Mucosa of descending colon (tissue), 3 donors: ENCODE measurements at regions of chr16 and their contacts with region 1.

Region 1: DNA sequence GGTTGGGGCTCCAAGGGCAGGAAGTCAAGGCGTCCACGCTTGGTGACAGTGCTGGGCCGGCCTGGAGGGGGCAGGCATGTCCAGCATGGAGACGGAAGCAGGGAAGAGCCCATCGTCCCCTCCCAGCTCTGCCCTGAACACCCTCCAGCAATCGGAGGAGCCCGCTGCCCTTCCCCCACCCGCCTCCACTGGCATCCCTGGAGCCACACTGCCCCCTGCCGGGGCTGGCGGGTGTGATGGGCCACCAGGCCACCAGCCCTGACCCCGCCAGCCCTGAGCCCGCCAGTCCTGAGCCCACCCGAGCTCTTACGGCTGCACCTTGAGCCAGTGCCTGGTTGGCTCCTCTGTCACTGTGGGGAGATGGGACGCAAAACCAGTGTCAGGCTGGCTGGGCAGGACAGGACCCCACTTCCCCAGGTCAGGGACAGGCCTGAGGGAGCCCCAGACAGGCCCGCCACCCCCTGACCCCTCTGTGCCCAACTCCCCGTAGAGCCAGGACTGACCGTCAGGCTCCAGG is 4.1 kb upstream of the CDH15 start:
- DNase-seq: peak; percentile 90 to 95 (median 94)
- ATAC-seq: peak; percentile 73
- H3K4me3 ChIP-seq: no peak overlapping the region
- H3K4me1 ChIP-seq: peaks cover 12% of the 10 kb centered on the region
- CTCF ChIP-seq: peak; percentile 79

Region 2: GRCh38 chr16:88941913-88942909 is 225.3 kb before region 1 on chr16:
- intact Hi-C with region 1: loop called in 1 of 2 experiments (anchors 5 kb)
- DNase-seq: peak in 2 of 3 donors; percentile 60 to 69
- ATAC-seq: peak; percentile 70
- H3K4me3 ChIP-seq: no peak overlapping the region
- H3K4me1 ChIP-seq: peaks cover 9% of the 10 kb centered on the region
- CTCF ChIP-seq: peak; percentile 83

Region 3: DNA sequence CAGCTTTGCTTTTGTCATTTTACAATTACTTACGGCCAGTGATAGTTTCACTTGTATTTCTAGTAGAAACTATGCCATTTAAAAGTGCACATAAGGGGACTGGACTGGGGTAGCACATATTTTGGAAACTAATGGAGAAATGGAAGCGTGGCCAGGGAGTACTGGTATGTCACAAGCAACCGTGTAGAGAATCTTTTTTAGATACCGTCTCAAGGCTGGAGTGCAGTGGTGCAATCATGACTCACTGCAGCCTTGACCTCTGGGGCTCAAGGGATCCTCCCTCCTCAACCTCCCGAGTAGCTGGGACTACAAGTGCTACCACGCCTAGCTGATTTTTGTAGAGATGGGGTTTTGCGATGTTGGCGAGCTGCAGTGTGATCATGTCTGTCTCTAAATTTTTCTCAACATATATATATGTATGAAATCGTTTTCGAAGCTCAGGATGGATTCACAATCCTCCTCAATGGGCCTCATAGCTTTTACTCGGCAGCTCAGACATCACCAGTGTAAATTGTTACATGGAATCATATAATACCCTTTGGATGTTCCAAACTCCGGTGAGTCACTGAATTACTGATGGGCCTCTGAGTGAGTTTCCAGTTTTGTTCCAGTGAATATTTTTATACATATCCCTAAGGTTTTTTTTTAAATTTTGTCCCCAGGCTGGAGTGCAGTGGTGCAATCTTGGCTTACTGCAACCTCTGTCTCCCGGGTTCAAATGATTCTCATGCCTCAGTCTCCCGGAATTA is 101.7 kb after region 1 on chr16:
- intact Hi-C with region 1: no loop called
- DNase-seq: peak in 1 of 3 donors; percentile 37
- ATAC-seq: peak; percentile 42
- H3K4me3 ChIP-seq: no peak overlapping the region
- H3K4me1 ChIP-seq: peaks cover 6% of the 10 kb centered on the region
- CTCF ChIP-seq: no peak